ENCODE measurements at regions of chr11 and their contacts with region 1.

Region 1: DNA sequence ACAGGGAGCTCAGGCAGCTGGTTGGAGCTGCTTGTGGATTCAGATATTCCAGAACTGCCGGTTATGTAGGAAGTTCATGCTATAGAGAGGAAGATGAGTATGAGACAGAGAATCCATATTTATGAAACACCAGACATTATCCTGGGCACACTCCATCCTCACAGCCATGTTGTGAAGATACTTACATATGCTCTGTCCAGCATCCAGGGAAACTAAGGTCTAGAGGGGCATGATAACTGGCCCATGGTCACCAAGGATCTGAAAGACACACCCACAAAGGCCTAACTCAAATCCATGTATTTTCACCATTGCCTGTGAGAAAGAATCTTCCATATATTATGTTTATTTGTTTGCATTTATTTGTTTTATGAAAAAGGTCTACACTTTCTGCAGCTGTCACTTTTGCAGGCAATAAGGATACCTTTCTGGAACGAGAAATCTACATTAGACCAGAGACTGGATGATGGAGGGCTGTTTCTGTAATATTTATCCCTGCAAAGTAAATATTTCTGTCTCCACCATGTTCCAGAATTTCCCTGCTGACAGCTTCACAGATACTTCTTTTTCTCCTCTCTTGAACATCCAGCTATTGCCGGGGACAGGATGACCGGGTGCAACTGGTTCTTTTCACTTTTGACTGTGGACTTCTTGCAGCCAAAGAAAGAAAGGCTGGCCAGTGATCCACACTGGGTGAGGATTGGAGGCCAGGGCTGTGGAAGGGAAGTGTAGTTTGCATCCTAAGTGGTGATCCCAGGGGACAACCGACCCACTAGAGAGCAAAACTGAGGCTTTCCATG is 145.9 kb upstream of the NAV2 start:
- DNase-seq: no peak
- ATAC-seq: no peak
- H3K4me3 ChIP-seq: no peak overlapping the region
- H3K27ac ChIP-seq: no peak overlapping the region
- H3K4me1 ChIP-seq: peaks cover 0 to 6% of the 10 kb centered on the region in 2 experiments; a peak in 1 of 4 replicates
- H3K27me3 ChIP-seq: peaks cover 5% of the 10 kb centered on the region; the same call in 1 of the 2 replicates
- CTCF ChIP-seq: no peak
- POLR2A ChIP-seq: no peak
- RAD21 ChIP-seq: no peak

Region 2: DNA sequence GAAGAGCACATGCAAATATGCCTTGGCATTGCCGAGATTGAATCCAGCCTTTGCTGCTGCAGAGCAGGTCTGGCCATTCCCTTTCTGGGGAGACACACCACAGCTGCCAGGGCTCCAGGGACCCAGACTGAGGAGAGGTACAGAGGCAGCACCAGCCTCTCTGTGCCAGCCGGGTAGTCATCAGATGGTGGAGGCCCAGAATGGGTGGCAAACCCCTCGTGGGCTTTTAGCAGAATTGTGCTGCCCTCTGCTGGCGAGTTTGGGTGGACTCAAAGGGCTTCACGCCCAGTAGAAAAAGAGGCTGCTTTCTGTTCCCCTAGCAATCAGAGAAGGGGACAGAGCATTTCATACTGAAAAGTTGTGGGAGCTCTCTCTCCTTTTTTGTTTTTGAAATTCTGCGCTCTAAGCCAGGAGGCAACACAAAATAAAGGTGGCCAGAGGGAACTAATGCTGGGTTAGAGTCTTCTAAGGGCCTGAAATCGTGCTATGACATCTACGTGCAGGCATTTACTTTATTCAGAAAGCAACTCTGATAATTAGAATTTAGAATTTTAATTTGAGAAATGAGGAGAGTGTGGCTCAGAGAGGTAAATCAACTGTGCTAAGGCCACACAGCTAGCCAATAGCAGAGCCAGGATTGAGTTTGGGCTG is 13.0 kb before region 1 on chr11:
- CTCF ChIA-PET with region 1: no interaction called
- POLR2A ChIA-PET with region 1: no interaction called
- RAD21 ChIA-PET with region 1: no interaction called
- intact Hi-C with region 1: no loop called
- DNase-seq: peak; percentile 58
- ATAC-seq: peak; percentile 81
- H3K4me3 ChIP-seq: no peak overlapping the region
- H3K27ac ChIP-seq: no peak overlapping the region
- H3K4me1 ChIP-seq: no peaks in the 10 kb centered on the region
- H3K27me3 ChIP-seq: peaks cover 5% of the 10 kb centered on the region; the same call in 1 of the 2 replicates
- CTCF ChIP-seq: peak; percentile 81 to 97 (median 91)
- POLR2A ChIP-seq: no peak
- RAD21 ChIP-seq: peak; percentile 96

Region 3: GRCh38 chr11:19658344-19658743 is 91.6 kb after region 1 on chr11:
- CTCF ChIA-PET with region 1: interaction called, 5 read pairs
- POLR2A ChIA-PET with region 1: no interaction called
- RAD21 ChIA-PET with region 1: no interaction called
- intact Hi-C with region 1: loop called (anchors 2 kb)
- DNase-seq: no peak
- ATAC-seq: 0 out of 2 replicates have a peak, but pooled peaks have one; percentile 24
- H3K4me3 ChIP-seq: no peak overlapping the region
- H3K27ac ChIP-seq: no peak overlapping the region
- H3K4me1 ChIP-seq: peaks cover 18 to 29% of the 10 kb centered on the region in 2 experiments
- H3K27me3 ChIP-seq: no peaks in the 10 kb centered on the region
- CTCF ChIP-seq: peak; percentile 7 to 44 (median 38); a peak in 5 of 6 replicates
- POLR2A ChIP-seq: no peak
- RAD21 ChIP-seq: peak; percentile 26; the same call in 1 of the 2 replicates

Region 4: GRCh38 chr11:19808076-19808911 is 241.5 kb after region 1 on chr11:
- CTCF ChIA-PET with region 1: no interaction called
- POLR2A ChIA-PET with region 1: no interaction called
- RAD21 ChIA-PET with region 1: no interaction called
- intact Hi-C with region 1: loop called (anchors 2 kb)
- DNase-seq: no peak
- ATAC-seq: no peak
- H3K4me3 ChIP-seq: no peak overlapping the region
- H3K27ac ChIP-seq: no peak overlapping the region
- H3K4me1 ChIP-seq: peaks cover 8 to 10% of the 10 kb centered on the region in 2 experiments; a peak in 3 of 4 replicates
- H3K27me3 ChIP-seq: no peaks in the 10 kb centered on the region
- CTCF ChIP-seq: peak; percentile 24 to 28 (median 26); a peak in 2 of 6 replicates
- POLR2A ChIP-seq: no peak
- RAD21 ChIP-seq: peak; percentile 52

Measured in HCT116 (cell line).